K562 (cell line): ENCODE measurements at regions of chr3 and their contacts with region 1.

Region 1: GRCh38 chr3:126389112-126389793 is 5.5 kb upstream of the CFAP100 start:
- DNase-seq: peak; percentile 68 to 77 (median 72)
- ATAC-seq: peak; percentile 99
- H3K4me3 ChIP-seq: no peak overlapping the region; the same call in 1 of the 2 replicates
- H3K27ac ChIP-seq: no peak overlapping the region
- H3K4me1 ChIP-seq: peaks cover 0 to 13% of the 10 kb centered on the region in 2 experiments; a peak in 3 of 5 replicates
- H3K27me3 ChIP-seq: peaks cover 3 to 41% of the 10 kb centered on the region in 2 experiments; a peak in 4 of 5 replicates
- CTCF ChIP-seq: peak; percentile 91 to 99 (median 99)
- EP300 ChIP-seq: no peak
- POLR2A ChIP-seq: no peak
- RAD21 ChIP-seq: peak; percentile 91 to 93

Region 2: DNA sequence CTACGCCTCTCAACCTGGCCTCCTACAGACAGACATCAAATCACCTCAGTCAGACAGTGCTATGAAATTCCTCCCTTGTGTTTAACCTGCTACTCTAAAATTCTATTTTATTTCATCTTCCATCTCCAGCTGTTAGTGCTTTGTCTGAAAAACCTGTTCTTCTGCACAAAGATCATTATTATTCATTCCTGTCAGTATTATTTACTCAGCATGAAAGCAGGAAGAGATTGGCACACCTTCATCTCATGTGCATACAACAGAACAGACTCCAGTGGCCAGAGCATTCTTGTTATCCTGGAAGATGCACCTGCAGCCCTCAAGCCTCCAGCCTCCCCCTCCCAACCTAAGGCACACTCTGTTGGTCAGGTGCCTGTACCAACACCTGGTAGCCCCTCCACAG is 422.1 kb before region 1 on chr3:
- CTCF ChIA-PET with region 1: no interaction called
- POLR2A ChIA-PET with region 1: no interaction called
- in situ Hi-C with region 1: no loop called
- intact Hi-C with region 1: no loop called
- DNase-seq: no peak
- ATAC-seq: no peak
- H3K4me3 ChIP-seq: no peak overlapping the region
- H3K27ac ChIP-seq: no peak overlapping the region
- H3K4me1 ChIP-seq: no peaks in the 10 kb centered on the region
- H3K27me3 ChIP-seq: no peaks in the 10 kb centered on the region
- CTCF ChIP-seq: no peak
- EP300 ChIP-seq: no peak
- POLR2A ChIP-seq: no peak
- RAD21 ChIP-seq: no peak

Region 3: GRCh38 chr3:126134219-126134975 is 254.9 kb before region 1 on chr3:
- CTCF ChIA-PET with region 1: interaction called, 30 read pairs
- POLR2A ChIA-PET with region 1: no interaction called
- in situ Hi-C with region 1: loop called (anchors 25 kb)
- intact Hi-C with region 1: loop called (anchors 1 kb)
- DNase-seq: peak; percentile 45 to 62 (median 58)
- ATAC-seq: peak; percentile 94
- H3K4me3 ChIP-seq: no peak overlapping the region
- H3K27ac ChIP-seq: no peak overlapping the region
- H3K4me1 ChIP-seq: no peaks in the 10 kb centered on the region; a peak in 1 of 5 replicates
- H3K27me3 ChIP-seq: peaks cover 0 to 39% of the 10 kb centered on the region in 2 experiments; a peak in 2 of 5 replicates
- CTCF ChIP-seq: peak; percentile 61 to 76 (median 64)
- EP300 ChIP-seq: no peak
- POLR2A ChIP-seq: no peak
- RAD21 ChIP-seq: peak; percentile 78 to 82

Region 4: DNA sequence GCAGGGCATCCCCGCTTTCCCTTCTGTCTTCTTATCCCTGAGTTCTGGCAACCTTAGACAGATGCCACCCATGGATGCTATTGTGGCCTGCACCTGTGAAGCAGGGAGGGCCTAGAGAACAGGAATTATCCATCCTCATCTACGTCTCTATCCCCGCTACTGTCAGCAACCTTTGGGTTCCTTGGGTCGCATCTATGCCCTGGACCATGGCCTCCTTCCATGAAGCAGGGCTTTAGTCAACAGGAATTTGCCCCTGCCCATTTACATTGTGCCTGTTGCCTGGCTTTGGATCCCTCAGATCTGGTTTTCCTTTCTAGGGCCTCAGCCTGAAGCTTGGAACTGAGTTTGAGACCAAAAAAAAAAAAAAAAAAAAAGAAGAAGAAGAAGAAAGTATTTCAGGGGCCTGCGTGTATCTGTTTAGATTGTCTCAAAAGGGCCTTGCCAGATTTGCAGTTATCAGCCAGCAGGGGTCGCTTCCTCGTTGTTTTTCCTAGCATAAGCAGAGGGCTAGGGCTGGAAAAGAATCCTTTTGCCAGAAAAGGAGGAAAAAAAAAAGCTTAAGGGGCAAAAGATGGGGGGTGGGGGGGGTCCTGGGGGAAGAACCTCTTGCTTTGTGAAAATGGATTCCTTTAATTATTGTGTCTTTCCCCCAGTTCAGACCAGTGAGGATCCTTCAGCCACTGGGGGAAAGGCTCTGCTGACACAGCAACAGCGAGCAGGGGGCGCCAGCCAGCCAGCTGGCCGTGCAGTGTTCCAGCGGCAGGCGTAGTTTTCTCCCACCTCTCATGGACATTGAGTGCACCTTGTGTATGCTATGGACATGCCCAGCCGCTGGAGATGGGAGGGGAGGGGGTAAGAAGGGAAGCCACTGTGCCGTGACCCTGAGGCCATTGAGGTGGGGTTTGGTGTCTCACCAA is 143.2 kb before region 1 on chr3:
- CTCF ChIA-PET with region 1: interaction called, 6 read pairs
- POLR2A ChIA-PET with region 1: no interaction called
- in situ Hi-C with region 1: loop called (anchors 5 kb)
- intact Hi-C with region 1: loop called (anchors 1 kb)
- DNase-seq: peak; percentile 29 to 51 (median 32)
- ATAC-seq: peak; percentile 90
- H3K4me3 ChIP-seq: no peak overlapping the region
- H3K27ac ChIP-seq: no peak overlapping the region
- H3K4me1 ChIP-seq: no peaks in the 10 kb centered on the region; a peak in 1 of 5 replicates
- H3K27me3 ChIP-seq: no peaks in the 10 kb centered on the region
- CTCF ChIP-seq: peak; percentile 41 to 81 (median 42); a peak in 5 of 6 replicates
- EP300 ChIP-seq: no peak
- POLR2A ChIP-seq: no peak
- RAD21 ChIP-seq: peak in 1 of 2 experiments; percentile 31; a peak in 2 of 4 replicates

Region 5: GRCh38 chr3:126259411-126260391 is 129.6 kb before region 1 on chr3:
- CTCF ChIA-PET with region 1: interaction called, 3 read pairs
- POLR2A ChIA-PET with region 1: no interaction called
- in situ Hi-C with region 1: loop called (anchors 5 kb)
- intact Hi-C with region 1: loop called (anchors 1 kb)
- DNase-seq: peak; percentile 37 to 52 (median 40)
- ATAC-seq: peak; percentile 81
- H3K4me3 ChIP-seq: no peak overlapping the region
- H3K27ac ChIP-seq: no peak overlapping the region; the same call in 2 of the 3 replicates
- H3K4me1 ChIP-seq: peaks cover 4 to 5% of the 10 kb centered on the region in 2 experiments; a peak in 3 of 5 replicates
- H3K27me3 ChIP-seq: peaks cover 0 to 30% of the 10 kb centered on the region in 2 experiments; a peak in 2 of 5 replicates
- CTCF ChIP-seq: peak; percentile 52 to 60 (median 58)
- EP300 ChIP-seq: no peak
- POLR2A ChIP-seq: no peak
- RAD21 ChIP-seq: peak; percentile 70 to 80

Region 6: GRCh38 chr3:126300761-126301481 is 88.3 kb before region 1 on chr3:
- CTCF ChIA-PET with region 1: no interaction called
- POLR2A ChIA-PET with region 1: no interaction called
- in situ Hi-C with region 1: no loop called
- intact Hi-C with region 1: no loop called
- DNase-seq: no peak
- ATAC-seq: no peak
- H3K4me3 ChIP-seq: no peak overlapping the region
- H3K27ac ChIP-seq: no peak overlapping the region
- H3K4me1 ChIP-seq: 0 out of 5 replicates have a peak, but pooled peaks cover 0 to 4% of the 10 kb centered on the region in 2 experiments
- H3K27me3 ChIP-seq: peaks cover 0 to 16% of the 10 kb centered on the region in 2 experiments; a peak in 3 of 5 replicates
- CTCF ChIP-seq: no peak
- EP300 ChIP-seq: no peak
- POLR2A ChIP-seq: no peak
- RAD21 ChIP-seq: no peak

Region 7: GRCh38 chr3:126357295-126358037 is 31.8 kb before region 1 on chr3 and contains the start of gene KLF15:
- CTCF ChIA-PET with region 1: no interaction called
- POLR2A ChIA-PET with region 1: no interaction called
- in situ Hi-C with region 1: no loop called
- intact Hi-C with region 1: loop called (anchors 2 kb)
- DNase-seq: peak; percentile 82 to 90 (median 87)
- ATAC-seq: peak; percentile 82
- H3K4me3 ChIP-seq: peak within 1 kb of the TSS; percentile 40
- H3K27ac ChIP-seq: peak within 1 kb of the TSS; percentile 36; the same call in 1 of the 3 replicates
- H3K4me1 ChIP-seq: peaks cover 5 to 34% of the 10 kb centered on the region in 2 experiments; a peak in 3 of 5 replicates
- H3K27me3 ChIP-seq: peaks cover 0 to 20% of the 10 kb centered on the region in 2 experiments; a peak in 3 of 5 replicates
- CTCF ChIP-seq: no peak
- EP300 ChIP-seq: no peak
- POLR2A ChIP-seq: no peak
- RAD21 ChIP-seq: no peak
- polyA plus RNA-seq, gene KLF15: 0.08 to 0.13 TPM